Endothelial cell of umbilical vein (primary cell): ENCODE measurements at regions of chr11 and their contacts with region 1.

Region 1: GRCh38 chr11:45804761-45805304 is at the start of gene SLC35C1:
- DNase-seq: peak; percentile 89
- H3K4me3 ChIP-seq: peak within 1 kb of the TSS; percentile 55 to 70 (median 55)
- H3K27ac ChIP-seq: peak within 1 kb of the TSS; percentile 66
- H3K4me1 ChIP-seq: peaks cover 36% of the 10 kb centered on the region
- H3K27me3 ChIP-seq: no peaks in the 10 kb centered on the region
- CTCF ChIP-seq: peak in 1 of 2 donors; percentile 10
- POLR2A ChIP-seq: peak; percentile 92
- total RNA-seq, gene SLC35C1: 17.1 and 19.8 TPM in 2 replicates

Region 2: GRCh38 chr11:45147017-45147728 is 657.7 kb before region 1 on chr11:
- CTCF ChIA-PET with region 1: no interaction called
- POLR2A ChIA-PET with region 1: no interaction called
- dilution Hi-C with region 1: no loop called
- intact Hi-C with region 1: loop called (anchors 1 kb)
- DNase-seq: peak; percentile 94
- H3K4me3 ChIP-seq: peak overlapping the region; percentile 41 to 86 (median 59)
- H3K27ac ChIP-seq: peak overlapping the region; percentile 47
- H3K4me1 ChIP-seq: peaks cover 17% of the 10 kb centered on the region
- H3K27me3 ChIP-seq: peaks cover 10 to 31% of the 10 kb centered on the region in 2 experiments
- CTCF ChIP-seq: no peak
- POLR2A ChIP-seq: no peak

Region 3: GRCh38 chr11:45665206-45665932 is 139.5 kb before region 1 on chr11 and contains the start of gene CHST1:
- CTCF ChIA-PET with region 1: no interaction called
- POLR2A ChIA-PET with region 1: no interaction called
- dilution Hi-C with region 1: no loop called
- intact Hi-C with region 1: loop called (anchors 5 kb)
- DNase-seq: peak; percentile 51
- H3K4me3 ChIP-seq: peak within 1 kb of the TSS; percentile 47 to 59 (median 55)
- H3K27ac ChIP-seq: no peak within 1 kb of the TSS
- H3K4me1 ChIP-seq: peaks cover 29% of the 10 kb centered on the region
- H3K27me3 ChIP-seq: peaks cover 0 to 8% of the 10 kb centered on the region in 2 experiments
- CTCF ChIP-seq: no peak
- POLR2A ChIP-seq: no peak
- total RNA-seq, gene CHST1: 40.5 and 71.2 TPM in 2 replicates

Region 4: GRCh38 chr11:45846974-45847910 is 42.4 kb after region 1 on chr11 and contains the start of gene CRY2:
- CTCF ChIA-PET with region 1: interaction called, 5 read pairs
- POLR2A ChIA-PET with region 1: no interaction called
- dilution Hi-C with region 1: no loop called
- intact Hi-C with region 1: loop called (anchors 1 kb)
- DNase-seq: peak; percentile 98
- H3K4me3 ChIP-seq: peak within 1 kb of the TSS; percentile 39 to 81 (median 68)
- H3K27ac ChIP-seq: peak within 1 kb of the TSS; percentile 63
- H3K4me1 ChIP-seq: peaks cover 13% of the 10 kb centered on the region
- H3K27me3 ChIP-seq: peaks cover 7 to 12% of the 10 kb centered on the region in 2 experiments
- CTCF ChIP-seq: no peak
- POLR2A ChIP-seq: peak; percentile 81
- total RNA-seq, gene CRY2: 8.8 and 11.7 TPM in 2 replicates

Region 5: DNA sequence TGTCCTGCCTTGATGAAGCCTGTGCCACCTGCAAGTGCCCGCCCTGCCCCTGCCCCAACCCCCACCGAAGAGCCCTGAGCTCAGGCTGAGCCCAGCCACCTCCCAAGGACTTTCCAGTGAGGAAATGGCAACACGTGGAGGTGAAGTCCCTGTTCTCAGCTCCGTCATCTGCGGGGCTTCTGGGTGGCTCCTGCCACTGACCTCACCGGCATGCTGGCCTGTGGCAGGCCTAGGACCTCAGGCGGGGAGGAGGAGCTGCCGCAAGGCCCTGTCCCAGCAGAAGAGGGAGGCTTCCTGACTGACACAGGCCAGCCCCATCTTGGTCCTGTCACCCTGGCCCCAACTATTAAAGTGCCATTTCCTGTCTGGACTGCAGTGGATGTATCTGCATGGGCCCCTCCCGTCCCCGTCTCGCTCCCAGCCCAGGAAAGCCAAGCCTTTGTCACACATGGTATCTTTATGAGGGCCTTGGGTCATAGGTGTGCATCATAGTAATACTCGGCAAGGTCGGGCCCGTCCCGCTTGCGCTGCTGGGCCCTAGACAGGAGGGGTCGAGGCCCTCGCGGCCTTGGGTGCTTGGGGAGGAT is 101.4 kb after region 1 on chr11:
- CTCF ChIA-PET with region 1: no interaction called
- POLR2A ChIA-PET with region 1: no interaction called
- dilution Hi-C with region 1: no loop called
- intact Hi-C with region 1: no loop called
- DNase-seq: no peak
- H3K4me3 ChIP-seq: no peak overlapping the region
- H3K27ac ChIP-seq: no peak overlapping the region
- H3K4me1 ChIP-seq: no peaks in the 10 kb centered on the region
- H3K27me3 ChIP-seq: no peaks in the 10 kb centered on the region
- CTCF ChIP-seq: no peak
- POLR2A ChIP-seq: no peak